OCI-LY7 (cell line): ENCODE measurements at regions of chr18 and their contacts with region 1.

Region 1: GRCh38 chr18:37537868-37538525 is 27.6 kb downstream of the CELF4 start:
- DNase-seq: peak; percentile 62
- H3K4me3 ChIP-seq: no peak overlapping the region
- H3K27ac ChIP-seq: no peak overlapping the region
- H3K4me1 ChIP-seq: peaks cover 48% of the 10 kb centered on the region
- CTCF ChIP-seq: peak; percentile 73

Region 2: GRCh38 chr18:37385846-37386778 is 151.9 kb before region 1 on chr18:
- CTCF ChIA-PET with region 1: no interaction called
- POLR2A ChIA-PET with region 1: no interaction called
- intact Hi-C with region 1: loop called (anchors 5 kb)
- DNase-seq: peak; percentile 45
- H3K4me3 ChIP-seq: no peak overlapping the region
- H3K27ac ChIP-seq: no peak overlapping the region
- H3K4me1 ChIP-seq: no peaks in the 10 kb centered on the region
- CTCF ChIP-seq: peak; percentile 78

Region 3: DNA sequence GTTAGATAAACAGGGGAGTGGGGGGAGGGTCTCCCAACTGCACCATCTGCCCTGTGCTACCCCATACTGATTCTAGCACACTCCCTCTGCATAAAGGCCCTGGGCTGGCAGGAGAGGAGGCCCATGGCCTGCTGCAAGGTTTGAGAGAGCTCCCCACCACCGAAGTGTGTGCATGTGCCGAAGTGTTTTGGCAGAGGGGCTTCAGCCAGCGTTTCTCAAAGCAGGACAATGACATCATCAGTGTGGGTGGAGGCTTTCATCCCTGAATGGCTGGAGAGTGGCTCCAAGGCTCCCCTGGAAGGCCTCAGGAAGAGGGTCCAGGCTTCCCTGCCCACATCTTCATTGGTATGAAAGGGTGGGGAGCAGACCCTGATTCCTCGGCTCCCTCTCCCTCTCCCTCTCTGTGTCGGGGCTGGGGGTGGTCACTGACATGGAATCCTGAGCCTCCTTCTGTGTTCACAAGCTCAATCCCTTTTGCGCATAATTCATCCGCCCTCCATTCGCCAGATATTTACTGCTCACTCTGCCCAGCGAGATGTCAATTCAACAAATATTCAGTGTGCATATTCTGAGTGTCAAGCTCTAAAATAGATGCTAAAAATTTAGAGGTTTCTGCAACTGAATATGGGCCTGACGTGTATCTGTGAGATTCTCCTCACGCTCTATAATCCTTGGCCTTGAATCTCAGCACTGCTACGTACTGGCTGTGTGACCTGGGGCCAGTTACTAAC is 94.5 kb before region 1 on chr18:
- CTCF ChIA-PET with region 1: no interaction called
- POLR2A ChIA-PET with region 1: no interaction called
- intact Hi-C with region 1: loop called (anchors 1 kb)
- DNase-seq: no peak
- H3K4me3 ChIP-seq: no peak overlapping the region
- H3K27ac ChIP-seq: no peak overlapping the region
- H3K4me1 ChIP-seq: no peaks in the 10 kb centered on the region
- CTCF ChIP-seq: no peak

Region 4: DNA sequence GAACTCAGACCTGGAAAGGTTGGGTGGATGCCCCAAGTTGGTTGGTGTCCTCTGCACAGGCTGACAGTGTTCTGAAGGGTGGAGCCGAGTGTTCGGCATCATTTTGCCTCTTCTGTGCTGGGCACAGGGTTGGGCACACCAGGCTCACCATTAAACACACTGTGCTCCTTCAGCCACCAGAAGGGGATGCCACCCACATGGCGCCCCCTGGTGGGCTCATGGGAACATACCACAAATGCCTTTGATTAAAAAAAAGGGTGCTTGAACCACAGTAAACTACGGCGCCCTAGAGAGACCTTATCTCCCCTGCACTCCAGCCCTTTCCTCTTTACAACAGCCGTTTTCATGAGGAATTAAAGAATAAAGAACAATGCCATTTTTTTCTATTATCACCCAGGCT is 61.8 kb before region 1 on chr18:
- CTCF ChIA-PET with region 1: no interaction called
- POLR2A ChIA-PET with region 1: interaction called, 4 read pairs
- intact Hi-C with region 1: loop called (anchors 5 kb)
- DNase-seq: peak; percentile 35
- H3K4me3 ChIP-seq: no peak overlapping the region
- H3K27ac ChIP-seq: no peak overlapping the region
- H3K4me1 ChIP-seq: no peaks in the 10 kb centered on the region
- CTCF ChIP-seq: peak; percentile 70

Region 5: GRCh38 chr18:37902344-37902743 is 364.3 kb after region 1 on chr18:
- CTCF ChIA-PET with region 1: no interaction called
- POLR2A ChIA-PET with region 1: no interaction called
- intact Hi-C with region 1: no loop called
- DNase-seq: no peak
- H3K4me3 ChIP-seq: no peak overlapping the region
- H3K27ac ChIP-seq: no peak overlapping the region
- H3K4me1 ChIP-seq: no peaks in the 10 kb centered on the region
- CTCF ChIP-seq: no peak